MCF 10A (cell line): ENCODE measurements at regions of chr17 and their contacts with region 1.

Region 1: GRCh38 chr17:8383143-8383822 is at the start of gene RPL26:
- DNase-seq: peak; percentile 99
- H3K4me3 Mint-ChIP-seq: peak within 1 kb of the TSS; percentile 97
- H3K27ac Mint-ChIP-seq: peak within 1 kb of the TSS; percentile 100
- H3K4me1 Mint-ChIP-seq: peaks cover 21% of the 10 kb centered on the region
- H3K27me3 Mint-ChIP-seq: no peaks in the 10 kb centered on the region
- CTCF ChIP-seq: peak; percentile 81
- total RNA-seq, gene RPL26: 3,179 and 3,524 TPM in 2 replicates

Region 2: GRCh38 chr17:8332678-8333077 is 50.6 kb before region 1 on chr17:
- CTCF ChIA-PET with region 1: no interaction called
- POLR2A ChIA-PET with region 1: no interaction called
- intact Hi-C with region 1: no loop called
- DNase-seq: no peak
- H3K4me3 Mint-ChIP-seq: no peak overlapping the region
- H3K27ac Mint-ChIP-seq: no peak overlapping the region
- H3K4me1 Mint-ChIP-seq: no peaks in the 10 kb centered on the region
- H3K27me3 Mint-ChIP-seq: no peaks in the 10 kb centered on the region
- CTCF ChIP-seq: no peak

Region 3: GRCh38 chr17:8369944-8370343 is 13.3 kb before region 1 on chr17:
- CTCF ChIA-PET with region 1: interaction called, 6 read pairs
- POLR2A ChIA-PET with region 1: interaction called, 11 read pairs
- intact Hi-C with region 1: no loop called
- DNase-seq: no peak
- H3K4me3 Mint-ChIP-seq: no peak overlapping the region
- H3K27ac Mint-ChIP-seq: no peak overlapping the region
- H3K4me1 Mint-ChIP-seq: peaks cover 10% of the 10 kb centered on the region
- H3K27me3 Mint-ChIP-seq: no peaks in the 10 kb centered on the region
- CTCF ChIP-seq: no peak

Region 4: GRCh38 chr17:8393420-8394241 is 10.3 kb after region 1 on chr17:
- CTCF ChIA-PET with region 1: interaction called, 7 read pairs
- POLR2A ChIA-PET with region 1: interaction called, 18 read pairs
- intact Hi-C with region 1: no loop called
- DNase-seq: no peak
- H3K4me3 Mint-ChIP-seq: no peak overlapping the region
- H3K27ac Mint-ChIP-seq: no peak overlapping the region
- H3K4me1 Mint-ChIP-seq: peaks cover 10% of the 10 kb centered on the region
- H3K27me3 Mint-ChIP-seq: peaks cover 12% of the 10 kb centered on the region
- CTCF ChIP-seq: no peak

Region 5: GRCh38 chr17:8435245-8436168 is 52.2 kb after region 1 on chr17 and contains the start of gene NDEL1:
- CTCF ChIA-PET with region 1: interaction called, 3 read pairs
- POLR2A ChIA-PET with region 1: interaction called, 28 read pairs
- intact Hi-C with region 1: loop called (anchors 2 kb)
- DNase-seq: peak; percentile 97
- H3K4me3 Mint-ChIP-seq: peak within 1 kb of the TSS; percentile 84
- H3K27ac Mint-ChIP-seq: peak within 1 kb of the TSS; percentile 97
- H3K4me1 Mint-ChIP-seq: peaks cover 12% of the 10 kb centered on the region
- H3K27me3 Mint-ChIP-seq: no peaks in the 10 kb centered on the region
- CTCF ChIP-seq: no peak
- total RNA-seq, gene NDEL1: 95.3 and 112 TPM in 2 replicates

Region 6: GRCh38 chr17:8488901-8489300 is 105.6 kb after region 1 on chr17:
- CTCF ChIA-PET with region 1: interaction called, 3 read pairs
- POLR2A ChIA-PET with region 1: interaction called, 4 read pairs
- intact Hi-C with region 1: loop called (anchors 1 kb)
- DNase-seq: peak; percentile 80
- H3K4me3 Mint-ChIP-seq: no peak overlapping the region
- H3K27ac Mint-ChIP-seq: peak overlapping the region; percentile 77
- H3K4me1 Mint-ChIP-seq: peaks cover 7% of the 10 kb centered on the region
- H3K27me3 Mint-ChIP-seq: no peaks in the 10 kb centered on the region
- CTCF ChIP-seq: no peak